CD4-positive, alpha-beta T cell (primary cell): ENCODE measurements at regions of chr2 and their contacts with region 1.

Region 1: DNA sequence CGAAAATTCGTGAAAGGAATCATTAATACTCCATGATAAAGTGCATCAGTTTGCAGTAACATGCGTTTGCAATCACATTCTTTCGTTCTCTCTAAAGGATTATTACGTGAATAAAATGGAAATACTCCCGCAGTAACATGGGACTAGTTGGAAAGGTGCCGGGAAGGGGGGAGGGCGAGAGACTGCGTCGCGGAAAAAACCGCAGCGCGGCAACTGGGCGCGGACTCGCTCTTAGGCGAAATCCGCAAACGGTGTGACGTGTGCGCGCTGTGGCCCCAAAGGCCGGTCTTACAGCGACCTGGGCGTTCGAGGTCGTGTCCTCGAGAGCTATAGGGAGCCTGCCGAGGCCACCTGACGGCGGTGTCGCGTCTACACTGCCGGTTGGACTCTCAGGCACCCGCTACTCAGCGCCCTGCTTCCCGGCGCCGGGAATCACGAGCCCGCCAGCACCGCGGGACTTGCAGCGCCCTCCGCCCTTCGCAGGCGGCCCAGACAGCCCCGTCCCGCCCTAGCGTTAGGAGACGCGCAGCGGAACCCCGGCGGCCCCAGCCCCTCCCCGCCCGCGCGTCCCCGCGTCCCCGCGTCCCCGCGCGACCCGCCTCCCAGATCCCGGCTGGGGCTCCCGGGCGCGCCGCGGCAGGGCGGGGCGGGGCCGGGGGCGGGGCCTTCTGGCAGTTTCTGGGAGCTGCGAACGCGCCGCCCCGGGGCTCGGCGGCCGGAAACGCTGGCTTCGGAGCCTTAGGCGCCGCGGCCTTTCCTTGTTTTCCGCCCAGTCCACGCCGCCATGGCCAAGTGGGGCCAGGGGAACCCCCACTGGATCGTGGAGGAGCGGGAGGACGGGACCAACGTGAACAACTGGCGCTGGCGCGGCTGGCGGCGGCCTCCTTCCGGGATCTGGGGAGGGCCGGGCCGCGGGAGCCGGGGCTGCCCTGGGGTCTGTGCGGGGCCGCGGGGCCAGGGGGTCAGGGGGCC is 15.1 kb downstream of the C2orf74 start:
- DNase-seq: peak; percentile 86 to 98 (median 94)
- ATAC-seq: peak; percentile 84
- H3K4me3 ChIP-seq: peak overlapping the region; percentile 88
- H3K4me3 Mint-ChIP-seq: peak overlapping the region; percentile 90
- H3K27ac ChIP-seq: peak overlapping the region; percentile 90 to 91
- H3K27ac Mint-ChIP-seq: peak overlapping the region; percentile 86
- H3K4me1 ChIP-seq: peaks cover 57% of the 10 kb centered on the region
- H3K4me1 Mint-ChIP-seq: peaks cover 48% of the 10 kb centered on the region
- H3K27me3 ChIP-seq: no peaks in the 10 kb centered on the region
- H3K27me3 Mint-ChIP-seq: no peaks in the 10 kb centered on the region
- CTCF ChIP-seq: no peak

Region 2: GRCh38 chr2:60756191-60757041 is 420.6 kb before region 1 on chr2 and contains the start of gene PAPOLG:
- CTCF ChIA-PET with region 1: no interaction called
- POLR2A ChIA-PET with region 1: interaction called, 5 read pairs
- intact Hi-C with region 1: loop called (anchors 2 to 10 kb)
- DNase-seq: peak; percentile 93 to 99 (median 96)
- ATAC-seq: peak; percentile 98
- H3K4me3 ChIP-seq: peak within 1 kb of the TSS; percentile 84
- H3K4me3 Mint-ChIP-seq: peak within 1 kb of the TSS; percentile 98
- H3K27ac ChIP-seq: peak within 1 kb of the TSS; percentile 80 to 91
- H3K27ac Mint-ChIP-seq: peak within 1 kb of the TSS; percentile 86
- H3K4me1 ChIP-seq: peaks cover 24% of the 10 kb centered on the region
- H3K4me1 Mint-ChIP-seq: peaks cover 50% of the 10 kb centered on the region
- H3K27me3 ChIP-seq: no peaks in the 10 kb centered on the region
- H3K27me3 Mint-ChIP-seq: no peaks in the 10 kb centered on the region
- CTCF ChIP-seq: no peak
- total RNA-seq, gene PAPOLG: 18.2 to 19.9 TPM

Region 3: GRCh38 chr2:61016808-61017555 is 160.1 kb before region 1 on chr2:
- CTCF ChIA-PET with region 1: no interaction called
- POLR2A ChIA-PET with region 1: interaction called, 11 read pairs
- intact Hi-C with region 1: loop called in 1 of 2 experiments (anchors 2 kb)
- DNase-seq: peak; percentile 39 to 83 (median 58)
- ATAC-seq: peak; percentile 73
- H3K4me3 ChIP-seq: peak overlapping the region; percentile 64
- H3K4me3 Mint-ChIP-seq: peak overlapping the region; percentile 100
- H3K27ac ChIP-seq: peak overlapping the region; percentile 71 to 85
- H3K27ac Mint-ChIP-seq: peak overlapping the region; percentile 89
- H3K4me1 ChIP-seq: peaks cover 10% of the 10 kb centered on the region
- H3K4me1 Mint-ChIP-seq: peaks cover 46% of the 10 kb centered on the region
- H3K27me3 ChIP-seq: no peaks in the 10 kb centered on the region
- H3K27me3 Mint-ChIP-seq: no peaks in the 10 kb centered on the region
- CTCF ChIP-seq: no peak

Region 4: DNA sequence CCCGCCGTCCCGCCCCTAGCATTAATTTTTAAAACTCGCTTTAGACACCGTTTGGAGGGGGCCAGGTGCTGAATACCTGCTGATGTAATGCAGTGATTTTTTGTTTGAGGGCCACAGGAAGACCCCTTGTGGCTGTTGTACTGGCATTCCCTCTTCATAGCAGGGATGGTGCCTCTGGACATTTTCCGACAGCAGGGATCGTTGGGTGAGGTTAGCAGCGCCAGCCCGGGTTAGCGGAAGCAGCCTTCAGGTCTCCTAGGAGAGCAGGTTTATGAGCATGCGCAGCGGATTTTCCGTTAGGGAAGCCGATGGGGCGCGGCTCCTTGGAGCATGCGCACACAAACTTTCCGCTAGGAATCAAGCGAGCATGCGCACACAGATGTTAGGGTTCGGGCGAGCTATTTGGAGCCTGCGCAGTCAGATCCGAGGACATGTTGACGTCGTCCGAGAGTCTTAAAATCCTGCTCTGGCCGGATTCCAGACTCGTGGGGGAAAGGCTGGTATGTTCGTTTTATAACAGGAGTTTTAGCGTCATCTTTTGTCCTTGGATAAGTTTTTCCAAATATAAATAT is 32.3 kb before region 1 on chr2:
- CTCF ChIA-PET with region 1: interaction called, 4 read pairs
- POLR2A ChIA-PET with region 1: interaction called, 69 read pairs
- intact Hi-C with region 1: loop called (anchors 2 kb)
- DNase-seq: peak; percentile 80 to 97 (median 88)
- ATAC-seq: peak; percentile 89
- H3K4me3 ChIP-seq: peak overlapping the region; percentile 70
- H3K4me3 Mint-ChIP-seq: peak overlapping the region; percentile 89
- H3K27ac ChIP-seq: peak overlapping the region; percentile 21 to 69
- H3K27ac Mint-ChIP-seq: peak overlapping the region; percentile 86
- H3K4me1 ChIP-seq: peaks cover 12% of the 10 kb centered on the region
- H3K4me1 Mint-ChIP-seq: peaks cover 7% of the 10 kb centered on the region
- H3K27me3 ChIP-seq: no peaks in the 10 kb centered on the region
- H3K27me3 Mint-ChIP-seq: no peaks in the 10 kb centered on the region
- CTCF ChIP-seq: no peak

Region 5: DNA sequence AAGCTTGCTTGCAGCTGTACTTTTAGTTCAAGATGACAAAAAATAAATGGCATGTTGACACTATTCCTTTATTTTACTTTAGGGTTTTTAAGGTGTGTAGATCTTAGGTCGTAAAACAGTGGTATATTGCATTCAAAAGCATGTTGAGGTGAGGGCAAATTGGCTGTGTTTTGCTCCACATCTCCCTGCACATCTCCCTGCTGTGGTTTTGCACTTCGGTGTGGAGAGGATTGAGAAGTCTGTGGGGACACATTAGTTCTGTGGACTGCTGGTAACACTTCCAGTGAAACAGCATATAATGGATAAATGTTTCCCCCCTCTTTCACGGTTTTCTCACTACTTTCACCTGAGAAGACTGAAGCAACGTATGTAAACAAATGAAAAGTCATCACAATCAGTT is 10.0 kb after region 1 on chr2:
- CTCF ChIA-PET with region 1: interaction called, 3 read pairs
- POLR2A ChIA-PET with region 1: interaction called, 33 read pairs
- intact Hi-C with region 1: no loop called
- DNase-seq: no peak
- ATAC-seq: no peak
- H3K4me3 ChIP-seq: no peak overlapping the region
- H3K4me3 Mint-ChIP-seq: no peak overlapping the region
- H3K27ac ChIP-seq: no peak overlapping the region
- H3K27ac Mint-ChIP-seq: no peak overlapping the region
- H3K4me1 ChIP-seq: peaks cover 5% of the 10 kb centered on the region
- H3K4me1 Mint-ChIP-seq: peaks cover 45% of the 10 kb centered on the region
- H3K27me3 ChIP-seq: no peaks in the 10 kb centered on the region
- H3K27me3 Mint-ChIP-seq: no peaks in the 10 kb centered on the region
- CTCF ChIP-seq: no peak

Region 6: GRCh38 chr2:61470965-61471904 is 294.2 kb after region 1 on chr2 and contains the start of gene USP34:
- CTCF ChIA-PET with region 1: no interaction called
- POLR2A ChIA-PET with region 1: interaction called, 5 read pairs
- intact Hi-C with region 1: loop called in 1 of 2 experiments (anchors 5 kb)
- DNase-seq: peak; percentile 83 to 98 (median 90)
- ATAC-seq: peak; percentile 86
- H3K4me3 ChIP-seq: peak within 1 kb of the TSS; percentile 99
- H3K4me3 Mint-ChIP-seq: peak within 1 kb of the TSS; percentile 99
- H3K27ac ChIP-seq: peak within 1 kb of the TSS; percentile 95 to 100
- H3K27ac Mint-ChIP-seq: peak within 1 kb of the TSS; percentile 95
- H3K4me1 ChIP-seq: peaks cover 38% of the 10 kb centered on the region
- H3K4me1 Mint-ChIP-seq: peaks cover 36% of the 10 kb centered on the region
- H3K27me3 ChIP-seq: no peaks in the 10 kb centered on the region
- H3K27me3 Mint-ChIP-seq: no peaks in the 10 kb centered on the region
- CTCF ChIP-seq: no peak
- total RNA-seq, gene USP34: 137 to 138 TPM

Region 7: DNA sequence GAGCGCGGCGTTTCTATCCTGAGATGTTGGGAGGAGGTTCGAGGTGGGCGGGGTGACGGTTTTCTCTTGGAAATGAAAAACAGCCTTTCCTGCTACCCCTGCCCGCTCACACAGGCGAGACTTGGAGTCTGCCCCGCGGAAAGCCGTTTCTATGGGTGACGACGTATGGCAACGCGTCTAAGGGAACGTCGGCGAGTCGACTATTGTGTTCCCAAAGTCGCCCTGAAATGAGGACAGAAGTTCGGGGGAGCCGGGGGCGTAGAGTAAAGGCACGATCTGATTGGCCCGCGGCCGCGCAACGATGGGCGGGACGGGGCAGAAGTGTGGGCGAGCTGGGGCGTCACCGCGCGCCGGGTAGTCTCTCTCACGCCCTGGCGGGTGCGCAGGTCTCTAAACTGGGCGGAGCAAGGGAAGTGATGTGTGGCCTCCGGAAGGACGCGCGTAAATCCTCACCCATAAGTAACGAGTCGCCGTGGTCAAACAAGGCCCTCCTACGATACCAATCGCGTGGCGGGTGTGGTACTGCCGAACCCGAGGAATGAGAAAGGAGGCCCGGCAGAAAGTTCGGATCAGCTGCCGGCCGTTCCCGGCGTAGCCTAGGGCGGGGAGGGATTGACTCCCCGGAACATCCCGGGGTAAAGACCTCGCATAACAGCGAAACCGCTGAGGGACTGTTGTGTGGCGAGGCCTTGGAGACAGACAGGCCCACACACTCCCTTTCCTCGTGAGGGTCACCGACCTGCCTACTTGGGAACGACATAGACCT is 587.2 kb after region 1 on chr2:
- CTCF ChIA-PET with region 1: no interaction called
- POLR2A ChIA-PET with region 1: no interaction called
- intact Hi-C with region 1: loop called in 1 of 2 experiments (anchors 10 kb)
- DNase-seq: peak; percentile 85 to 99 (median 93)
- ATAC-seq: peak; percentile 96
- H3K4me3 ChIP-seq: peak overlapping the region; percentile 89
- H3K4me3 Mint-ChIP-seq: peak overlapping the region; percentile 96
- H3K27ac ChIP-seq: peak overlapping the region; percentile 92 to 98
- H3K27ac Mint-ChIP-seq: peak overlapping the region; percentile 96
- H3K4me1 ChIP-seq: peaks cover 13% of the 10 kb centered on the region
- H3K4me1 Mint-ChIP-seq: peaks cover 22% of the 10 kb centered on the region
- H3K27me3 ChIP-seq: no peaks in the 10 kb centered on the region
- H3K27me3 Mint-ChIP-seq: no peaks in the 10 kb centered on the region
- CTCF ChIP-seq: no peak